IMR-90 (cell line): ENCODE measurements at regions of chr12 and their contacts with region 1.

Region 1: DNA sequence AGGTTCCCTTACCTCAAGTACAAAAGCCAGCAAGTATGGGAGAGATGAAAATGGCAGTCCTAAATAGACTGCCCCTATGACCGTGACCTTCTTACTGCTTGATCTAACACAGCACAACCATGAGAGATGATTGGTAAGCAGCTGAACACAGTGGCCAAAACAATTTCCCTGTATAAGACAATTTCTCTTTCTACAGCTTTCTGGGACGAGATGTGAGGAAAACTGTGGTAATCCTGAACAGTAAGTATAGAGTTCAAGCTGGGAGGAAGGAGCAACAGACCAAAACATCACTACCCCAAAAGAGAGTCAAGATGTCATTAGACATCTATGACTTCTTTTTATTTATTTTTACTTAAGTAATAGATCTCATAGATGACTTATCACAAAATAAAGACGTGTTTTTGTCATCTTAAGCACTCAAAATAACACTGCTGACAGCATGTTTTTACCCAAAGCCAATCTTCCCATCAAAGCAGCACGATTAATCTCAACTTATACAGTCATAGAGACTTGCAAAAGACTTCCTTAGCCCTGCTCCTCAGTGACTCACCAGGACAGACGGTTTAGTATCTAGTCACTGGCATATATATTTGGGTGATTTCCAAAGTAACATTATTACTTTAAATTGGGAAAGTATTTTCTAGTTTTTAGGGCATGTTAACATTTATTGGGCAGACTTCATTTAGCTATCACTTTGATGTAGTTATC is 3.7 kb downstream of the TMEM52B start:
- DNase-seq: peak; percentile 92
- ATAC-seq: peak; percentile 63
- H3K4me3 ChIP-seq: no peak overlapping the region
- H3K27ac ChIP-seq: peak overlapping the region; percentile 88
- H3K4me1 ChIP-seq: peaks cover 28% of the 10 kb centered on the region
- H3K27me3 ChIP-seq: no peaks in the 10 kb centered on the region
- CTCF ChIP-seq: no peak
- POLR2A ChIP-seq: no peak
- RAD21 ChIP-seq: no peak

Region 2: GRCh38 chr12:9615420-9616136 is 566.9 kb before region 1 on chr12:
- CTCF ChIA-PET with region 1: interaction called, 10 read pairs
- POLR2A ChIA-PET with region 1: no interaction called
- dilution Hi-C with region 1: no loop called
- in situ Hi-C with region 1: no loop called
- intact Hi-C with region 1: no loop called
- DNase-seq: no peak
- ATAC-seq: no peak
- H3K4me3 ChIP-seq: no peak overlapping the region
- H3K27ac ChIP-seq: no peak overlapping the region
- H3K4me1 ChIP-seq: no peaks in the 10 kb centered on the region
- H3K27me3 ChIP-seq: no peaks in the 10 kb centered on the region
- CTCF ChIP-seq: no peak
- POLR2A ChIP-seq: no peak
- RAD21 ChIP-seq: no peak

Region 3: GRCh38 chr12:10170292-10170691 is 12.2 kb before region 1 on chr12:
- CTCF ChIA-PET with region 1: interaction called, 3 read pairs
- POLR2A ChIA-PET with region 1: interaction called, 5 read pairs
- dilution Hi-C with region 1: no loop called
- in situ Hi-C with region 1: no loop called
- intact Hi-C with region 1: loop called (anchors 1 kb)
- DNase-seq: no peak
- ATAC-seq: no peak
- H3K4me3 ChIP-seq: no peak overlapping the region
- H3K27ac ChIP-seq: peak overlapping the region; percentile 52; the same call in 1 of the 2 replicates
- H3K4me1 ChIP-seq: peaks cover 12% of the 10 kb centered on the region
- H3K27me3 ChIP-seq: no peaks in the 10 kb centered on the region
- CTCF ChIP-seq: no peak
- POLR2A ChIP-seq: no peak
- RAD21 ChIP-seq: no peak